GM12878 (cell line): ENCODE measurements at regions of chr9 and their contacts with region 1.

Region 1: GRCh38 chr9:133149126-133150107 is 14.3 kb downstream of the GBGT1 start:
- DNase-seq: peak; percentile 85
- ATAC-seq: peak; percentile 85
- H3K4me3 ChIP-seq: peak overlapping the region; percentile 55
- H3K27ac ChIP-seq: peak overlapping the region; percentile 72
- H3K4me1 ChIP-seq: peaks cover 15% of the 10 kb centered on the region
- H3K27me3 ChIP-seq: no peaks in the 10 kb centered on the region
- CTCF ChIP-seq: peak; percentile 23 to 32 (median 26); a peak in 4 of 6 replicates
- EP300 ChIP-seq: no peak
- POLR2A ChIP-seq: no peak
- RAD21 ChIP-seq: peak; percentile 27; the same call in 1 of the 2 replicates

Region 2: DNA sequence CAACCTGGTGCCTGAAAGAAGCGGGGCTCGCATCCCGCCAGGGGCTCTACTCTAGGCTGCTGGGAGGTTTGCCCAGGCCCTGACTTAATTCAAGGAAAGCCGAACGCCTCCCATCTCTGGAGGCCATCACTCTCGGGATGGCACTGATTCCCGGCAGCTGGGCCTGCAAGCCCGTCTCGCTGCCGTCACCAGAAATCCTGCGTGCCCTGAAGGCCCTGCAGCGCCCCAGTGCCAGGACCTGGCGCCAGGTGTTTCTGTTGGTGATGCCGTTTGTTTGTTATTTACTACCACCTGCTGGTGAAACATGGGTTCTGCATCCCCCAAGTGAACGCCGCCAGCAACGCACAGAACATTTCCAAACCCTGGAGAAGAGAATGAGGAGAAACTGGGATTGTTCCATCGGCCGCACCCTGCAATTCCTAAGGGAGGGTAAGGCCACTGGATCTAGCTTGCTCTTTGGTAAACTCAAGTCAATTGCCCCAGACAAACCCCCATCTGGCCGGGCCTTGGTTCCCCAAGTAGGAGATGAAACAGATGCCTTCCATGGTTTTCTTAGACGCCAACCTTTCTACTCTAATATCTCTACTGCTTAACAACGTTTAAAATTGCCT is 349.3 kb before region 1 on chr9:
- CTCF ChIA-PET with region 1: no interaction called
- POLR2A ChIA-PET with region 1: no interaction called
- RAD21 ChIA-PET with region 1: no interaction called
- SMC1A ChIA-PET with region 1: no interaction called
- in situ Hi-C with region 1: no loop called
- intact Hi-C with region 1: no loop called
- DNase-seq: no peak
- ATAC-seq: peak; percentile 92
- H3K4me3 ChIP-seq: no peak overlapping the region
- H3K27ac ChIP-seq: no peak overlapping the region
- H3K4me1 ChIP-seq: peaks cover 4% of the 10 kb centered on the region; the same call in 1 of the 2 replicates
- H3K27me3 ChIP-seq: no peaks in the 10 kb centered on the region; a peak in 2 of 4 replicates
- CTCF ChIP-seq: peak; percentile 83 to 90 (median 84)
- EP300 ChIP-seq: no peak
- POLR2A ChIP-seq: no peak
- RAD21 ChIP-seq: peak; percentile 93

Region 3: DNA sequence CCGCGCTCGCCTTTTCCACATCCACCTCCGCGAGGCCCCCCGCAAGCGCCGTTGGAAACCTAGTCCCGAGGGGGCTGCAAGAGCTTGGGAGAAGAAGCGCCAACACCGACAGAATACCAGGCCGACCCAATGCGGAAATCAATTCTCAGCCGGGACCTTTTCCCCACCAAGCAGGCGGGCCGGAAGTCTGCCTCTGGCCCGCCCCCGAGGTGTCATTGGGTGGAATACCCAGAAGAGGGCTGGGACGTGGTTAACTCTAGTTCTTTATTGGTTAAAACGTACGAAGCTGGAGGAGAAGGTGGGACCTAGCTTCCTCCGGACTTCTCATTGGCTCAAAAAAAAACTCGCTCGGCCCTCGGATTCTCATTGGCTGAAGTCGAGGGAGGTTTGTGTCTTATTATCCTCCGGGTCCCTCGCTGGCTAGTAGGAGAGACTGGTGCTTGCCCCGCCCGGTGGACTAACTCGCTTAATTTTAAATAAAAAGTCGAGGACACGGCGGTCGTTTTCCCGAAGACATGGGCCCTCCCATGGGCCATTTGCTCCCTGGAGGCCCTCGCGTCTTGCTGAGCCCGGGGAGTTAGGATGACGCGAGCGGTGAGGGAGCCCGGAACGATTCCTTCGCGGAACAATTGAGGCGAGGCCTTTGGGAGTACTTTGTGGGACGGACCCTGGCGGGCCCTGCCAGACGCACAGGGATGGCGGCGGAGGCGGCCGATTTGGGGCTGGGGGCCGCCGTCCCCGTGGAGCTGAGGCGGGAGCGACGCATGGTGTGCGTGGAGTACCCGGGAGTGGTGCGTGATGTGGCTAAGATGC is 118.9 kb before region 1 on chr9 and contains the start of gene GTF3C5:
- CTCF ChIA-PET with region 1: interaction called, 27 read pairs
- POLR2A ChIA-PET with region 1: interaction called, 4 read pairs
- RAD21 ChIA-PET with region 1: interaction called, 18 read pairs
- SMC1A ChIA-PET with region 1: interaction called, 5 read pairs
- in situ Hi-C with region 1: no loop called
- intact Hi-C with region 1: no loop called
- DNase-seq: peak; percentile 97
- ATAC-seq: peak; percentile 99
- H3K4me3 ChIP-seq: peak within 1 kb of the TSS; percentile 77
- H3K27ac ChIP-seq: peak within 1 kb of the TSS; percentile 91
- H3K4me1 ChIP-seq: peaks cover 13% of the 10 kb centered on the region
- H3K27me3 ChIP-seq: no peaks in the 10 kb centered on the region
- CTCF ChIP-seq: no peak
- EP300 ChIP-seq: peak in 1 of 2 experiments; percentile 35; a peak in 1 of 4 replicates
- POLR2A ChIP-seq: peak; percentile 95
- RAD21 ChIP-seq: no peak
- polyA plus RNA-seq, gene GTF3C5: 2.2 to 6.9 TPM

Region 4: GRCh38 chr9:133048569-133048968 is 100.8 kb before region 1 on chr9:
- CTCF ChIA-PET with region 1: interaction called, 8 read pairs
- POLR2A ChIA-PET with region 1: no interaction called
- RAD21 ChIA-PET with region 1: interaction called, 5 read pairs
- SMC1A ChIA-PET with region 1: interaction called, 3 read pairs
- in situ Hi-C with region 1: loop called (anchors 5 kb)
- intact Hi-C with region 1: no loop called
- DNase-seq: no peak
- ATAC-seq: peak; percentile 83
- H3K4me3 ChIP-seq: no peak overlapping the region
- H3K27ac ChIP-seq: no peak overlapping the region
- H3K4me1 ChIP-seq: no peaks in the 10 kb centered on the region
- H3K27me3 ChIP-seq: no peaks in the 10 kb centered on the region
- CTCF ChIP-seq: peak; percentile 30 to 48 (median 41); a peak in 4 of 6 replicates
- EP300 ChIP-seq: no peak
- POLR2A ChIP-seq: no peak
- RAD21 ChIP-seq: peak; percentile 44

Region 5: DNA sequence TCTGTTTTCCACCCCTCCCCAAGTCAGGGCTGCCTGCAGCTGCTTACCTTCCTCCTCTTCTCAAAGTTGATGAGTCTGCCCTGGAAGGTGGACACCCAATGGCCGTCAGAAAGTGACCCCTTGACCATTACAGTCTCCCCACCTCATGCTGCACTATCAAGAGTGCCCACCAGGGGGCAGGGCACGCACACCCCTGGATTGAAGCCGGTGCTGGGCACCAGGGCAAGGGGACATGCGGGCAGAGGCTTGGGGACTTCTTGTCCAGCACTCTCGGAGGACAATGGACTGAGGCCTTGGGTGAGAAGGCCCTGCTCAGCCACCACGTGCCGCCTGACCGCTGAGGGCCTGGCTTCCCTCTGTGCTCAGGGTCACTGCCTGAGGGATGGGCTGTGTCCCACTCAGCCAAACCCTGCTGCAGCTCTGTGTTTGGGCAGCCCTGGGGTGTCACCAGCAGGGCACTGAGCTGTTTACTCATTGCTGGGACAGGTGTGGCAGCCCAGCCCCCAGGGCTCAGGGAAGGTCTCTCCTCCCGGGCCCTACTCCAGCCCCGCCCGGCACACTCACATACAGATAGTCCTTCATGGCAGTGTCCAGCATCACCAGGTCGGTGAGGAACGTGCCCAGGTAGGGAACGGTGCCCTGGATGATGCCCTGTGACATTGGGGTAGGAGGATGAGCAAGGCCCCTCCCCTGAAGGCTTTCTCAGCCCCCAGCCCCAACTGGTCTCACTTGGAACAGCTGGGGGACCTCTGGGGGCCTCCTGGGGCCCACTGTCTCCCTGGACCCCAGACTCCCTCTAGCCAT is 46.0 kb before region 1 on chr9:
- CTCF ChIA-PET with region 1: interaction called, 401 read pairs
- POLR2A ChIA-PET with region 1: interaction called, 10 read pairs
- RAD21 ChIA-PET with region 1: interaction called, 25 read pairs
- SMC1A ChIA-PET with region 1: interaction called, 16 read pairs
- in situ Hi-C with region 1: loop called (anchors 5 kb)
- intact Hi-C with region 1: loop called (anchors 1 kb)
- DNase-seq: no peak
- ATAC-seq: peak; percentile 88
- H3K4me3 ChIP-seq: no peak overlapping the region
- H3K27ac ChIP-seq: no peak overlapping the region
- H3K4me1 ChIP-seq: no peaks in the 10 kb centered on the region
- H3K27me3 ChIP-seq: no peaks in the 10 kb centered on the region
- CTCF ChIP-seq: peak; percentile 94 to 96 (median 95)
- EP300 ChIP-seq: no peak
- POLR2A ChIP-seq: no peak; the same call in 1 of the 2 replicates
- RAD21 ChIP-seq: peak; percentile 95

Region 6: DNA sequence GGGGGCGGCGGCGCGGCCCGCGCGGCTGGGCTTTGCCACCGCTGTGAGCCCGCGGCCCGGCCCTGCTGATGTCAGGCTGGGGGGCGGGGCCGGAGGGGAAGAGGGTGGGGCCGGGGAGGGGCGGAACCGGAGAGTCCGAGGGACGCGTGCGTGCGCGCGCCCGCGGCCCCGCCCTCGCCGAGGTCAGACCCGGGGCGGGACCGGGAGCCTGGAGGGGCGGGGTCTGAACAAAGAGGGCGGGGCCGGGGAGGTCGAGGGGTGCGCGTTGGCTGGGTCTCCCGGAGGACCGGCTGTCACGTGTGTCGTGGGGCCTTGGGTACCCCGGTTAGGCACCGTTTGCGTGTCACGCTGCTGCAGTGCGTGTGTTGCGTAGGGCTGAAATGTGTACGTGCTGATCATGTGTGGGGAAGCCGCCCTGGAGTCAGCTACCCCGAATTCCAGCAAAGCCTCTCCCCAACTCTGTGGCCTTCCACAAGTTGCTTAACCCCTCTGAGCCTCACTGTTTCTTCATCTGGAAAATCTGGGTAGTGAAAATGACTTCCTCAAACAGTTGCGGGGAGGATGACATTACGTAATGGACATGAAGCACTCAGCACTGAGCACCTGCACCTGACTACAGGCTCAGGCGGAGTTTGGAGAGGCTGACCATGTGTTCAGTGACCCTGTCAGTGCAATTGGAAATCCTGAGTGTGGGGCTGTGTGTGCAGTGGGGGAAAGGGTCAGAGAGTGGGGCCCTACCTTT is 28.0 kb before region 1 on chr9 and contains the start of gene RALGDS:
- CTCF ChIA-PET with region 1: interaction called, 401 read pairs
- POLR2A ChIA-PET with region 1: interaction called, 66 read pairs
- RAD21 ChIA-PET with region 1: interaction called, 219 read pairs
- SMC1A ChIA-PET with region 1: interaction called, 44 read pairs
- in situ Hi-C with region 1: no loop called
- intact Hi-C with region 1: loop called (anchors 1 kb)
- DNase-seq: no peak
- ATAC-seq: peak; percentile 68
- H3K4me3 ChIP-seq: peak within 1 kb of the TSS; percentile 91
- H3K27ac ChIP-seq: peak within 1 kb of the TSS; percentile 81
- H3K4me1 ChIP-seq: peaks cover 53% of the 10 kb centered on the region
- H3K27me3 ChIP-seq: no peaks in the 10 kb centered on the region
- CTCF ChIP-seq: no peak
- EP300 ChIP-seq: no peak
- POLR2A ChIP-seq: no peak
- RAD21 ChIP-seq: no peak
- polyA plus RNA-seq, gene RALGDS: 1.3 to 2.0 TPM

Region 7: DNA sequence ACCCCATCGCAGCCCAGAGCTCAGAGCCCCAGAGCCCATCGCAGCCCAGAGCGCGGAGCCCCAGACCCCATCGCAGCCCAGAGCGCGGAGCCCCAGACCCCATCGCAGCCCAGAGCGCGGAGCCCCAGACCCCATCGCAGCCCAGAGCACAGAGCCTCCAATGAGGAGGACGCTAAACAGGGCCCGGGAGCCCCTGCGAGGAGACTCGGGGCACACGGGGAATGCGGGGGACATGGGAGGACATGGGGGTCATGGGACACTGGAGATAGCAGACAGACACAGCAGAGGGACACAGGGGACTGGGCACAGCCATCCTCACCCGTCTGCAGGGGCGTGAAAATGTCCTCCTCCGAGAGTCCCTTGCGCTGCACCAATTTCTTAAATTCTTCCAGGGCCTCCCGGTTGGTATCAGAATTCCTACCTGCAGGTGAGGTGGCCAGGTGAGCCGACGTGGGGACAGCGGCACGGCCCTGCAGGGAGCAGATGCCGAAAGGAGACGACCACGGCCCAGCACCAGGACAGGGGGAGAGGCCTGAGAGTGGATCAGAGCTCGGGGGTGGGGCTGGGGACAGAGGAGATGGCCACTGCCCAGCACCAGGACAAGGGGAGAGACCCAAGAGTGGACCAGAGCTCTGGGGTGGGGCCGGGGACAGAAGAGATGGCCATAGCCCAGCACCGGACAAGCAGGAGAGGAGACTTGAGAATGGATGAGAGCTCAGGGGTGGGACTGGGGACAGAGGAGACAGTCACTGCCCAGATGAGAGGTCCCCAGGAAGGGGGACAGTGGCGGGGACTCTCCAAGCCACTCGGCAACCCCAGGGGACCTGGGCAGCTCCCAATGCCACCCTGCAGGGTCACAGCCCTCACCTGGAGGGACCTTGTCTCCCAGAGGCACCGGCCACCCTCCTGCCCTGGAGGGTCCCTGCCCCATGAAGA is 56.8 kb after region 1 on chr9:
- CTCF ChIA-PET with region 1: no interaction called
- POLR2A ChIA-PET with region 1: no interaction called
- RAD21 ChIA-PET with region 1: no interaction called
- SMC1A ChIA-PET with region 1: no interaction called
- in situ Hi-C with region 1: no loop called
- intact Hi-C with region 1: no loop called
- DNase-seq: no peak
- ATAC-seq: no peak
- H3K4me3 ChIP-seq: no peak overlapping the region
- H3K27ac ChIP-seq: no peak overlapping the region
- H3K4me1 ChIP-seq: no peaks in the 10 kb centered on the region
- H3K27me3 ChIP-seq: 0 out of 4 replicates have a peak, but pooled peaks cover 0 to 3% of the 10 kb centered on the region in 2 experiments
- CTCF ChIP-seq: no peak
- EP300 ChIP-seq: no peak
- POLR2A ChIP-seq: no peak
- RAD21 ChIP-seq: no peak